Activated CD4-positive, alpha-beta T cell treated with anti-CD3 and anti-CD28 coated beads for 36 hours (primary cell): ENCODE measurements at regions of chr17 and their contacts with region 1.

Region 1: DNA sequence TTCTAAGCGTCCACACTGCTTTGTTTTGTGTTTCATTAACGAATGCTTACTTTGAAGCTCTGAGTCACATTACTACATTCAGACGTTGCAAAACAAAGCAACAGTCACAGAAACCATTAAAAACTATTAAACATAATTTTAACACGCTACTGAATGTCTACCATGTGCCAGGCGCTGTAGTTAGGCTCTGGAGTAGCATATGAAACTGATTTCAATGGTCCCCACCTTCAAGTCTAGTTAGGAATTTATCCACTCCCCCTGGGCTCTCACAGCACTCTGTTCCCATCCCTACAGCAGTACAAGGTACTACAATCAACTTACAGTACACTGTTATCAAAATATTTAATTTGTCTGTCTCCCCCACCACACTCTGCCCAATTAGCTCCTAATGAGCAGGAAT is 631 bp downstream of the UTP6 start:
- DNase-seq: no peak
- ATAC-seq: no peak
- H3K4me3 Mint-ChIP-seq: no peak overlapping the region
- H3K27ac Mint-ChIP-seq: no peak overlapping the region
- H3K4me1 Mint-ChIP-seq: peaks cover 17% of the 10 kb centered on the region
- H3K27me3 Mint-ChIP-seq: no peaks in the 10 kb centered on the region

Region 2: DNA sequence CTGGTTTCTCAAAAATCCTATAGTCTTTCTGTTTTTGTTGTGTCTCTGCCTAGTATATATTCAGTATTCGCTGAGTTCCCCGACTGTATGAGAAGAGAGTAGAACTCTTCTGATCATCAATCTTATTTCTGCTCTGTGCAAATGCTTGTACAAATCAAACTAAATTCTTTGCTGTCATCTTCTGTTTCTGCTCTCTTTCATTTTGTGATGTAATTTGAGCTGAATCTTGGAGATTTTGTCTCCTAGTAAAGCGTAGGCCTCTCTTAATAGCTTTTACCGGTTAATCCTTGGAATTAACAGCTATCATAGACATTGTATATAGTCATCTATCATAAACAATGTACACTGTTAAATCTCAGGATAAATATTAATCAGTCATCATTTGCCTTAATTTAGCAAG is 665.8 kb before region 1 on chr17:
- CTCF ChIA-PET with region 1: no interaction called
- POLR2A ChIA-PET with region 1: no interaction called
- intact Hi-C with region 1: no loop called
- DNase-seq: no peak
- ATAC-seq: no peak
- H3K4me3 Mint-ChIP-seq: no peak overlapping the region
- H3K27ac Mint-ChIP-seq: no peak overlapping the region
- H3K4me1 Mint-ChIP-seq: no peaks in the 10 kb centered on the region
- H3K27me3 Mint-ChIP-seq: no peaks in the 10 kb centered on the region

Region 3: GRCh38 chr17:31494259-31495021 is 406.4 kb before region 1 on chr17:
- CTCF ChIA-PET with region 1: interaction called, 3 read pairs
- POLR2A ChIA-PET with region 1: no interaction called
- intact Hi-C with region 1: loop called in 1 of 2 experiments (anchors 2 kb)
- DNase-seq: peak; percentile 82
- ATAC-seq: peak; percentile 86
- H3K4me3 Mint-ChIP-seq: peak overlapping the region; percentile 58
- H3K27ac Mint-ChIP-seq: peak overlapping the region; percentile 97
- H3K4me1 Mint-ChIP-seq: peaks cover 91% of the 10 kb centered on the region
- H3K27me3 Mint-ChIP-seq: no peaks in the 10 kb centered on the region

Region 4: GRCh38 chr17:31858642-31859473 is 42.0 kb before region 1 on chr17 and contains the start of gene COPRS:
- CTCF ChIA-PET with region 1: interaction called, 9 read pairs
- POLR2A ChIA-PET with region 1: no interaction called
- intact Hi-C with region 1: loop called (anchors 1 to 2 kb)
- DNase-seq: peak; percentile 91
- ATAC-seq: peak; percentile 77
- H3K4me3 Mint-ChIP-seq: peak within 1 kb of the TSS; percentile 84
- H3K27ac Mint-ChIP-seq: peak within 1 kb of the TSS; percentile 86
- H3K4me1 Mint-ChIP-seq: peaks cover 19% of the 10 kb centered on the region
- H3K27me3 Mint-ChIP-seq: no peaks in the 10 kb centered on the region
- total RNA-seq, gene COPRS: 35.0 to 41.3 TPM

Region 5: GRCh38 chr17:31919802-31920525 is 19.1 kb after region 1 on chr17:
- CTCF ChIA-PET with region 1: interaction called, 4 read pairs
- POLR2A ChIA-PET with region 1: interaction called, 3 read pairs
- intact Hi-C with region 1: loop called (anchors 1 to 2 kb)
- DNase-seq: peak; percentile 45
- ATAC-seq: peak; percentile 89
- H3K4me3 Mint-ChIP-seq: peak overlapping the region; percentile 43
- H3K27ac Mint-ChIP-seq: peak overlapping the region; percentile 94
- H3K4me1 Mint-ChIP-seq: peaks cover 25% of the 10 kb centered on the region
- H3K27me3 Mint-ChIP-seq: peaks cover 18% of the 10 kb centered on the region

Region 6: DNA sequence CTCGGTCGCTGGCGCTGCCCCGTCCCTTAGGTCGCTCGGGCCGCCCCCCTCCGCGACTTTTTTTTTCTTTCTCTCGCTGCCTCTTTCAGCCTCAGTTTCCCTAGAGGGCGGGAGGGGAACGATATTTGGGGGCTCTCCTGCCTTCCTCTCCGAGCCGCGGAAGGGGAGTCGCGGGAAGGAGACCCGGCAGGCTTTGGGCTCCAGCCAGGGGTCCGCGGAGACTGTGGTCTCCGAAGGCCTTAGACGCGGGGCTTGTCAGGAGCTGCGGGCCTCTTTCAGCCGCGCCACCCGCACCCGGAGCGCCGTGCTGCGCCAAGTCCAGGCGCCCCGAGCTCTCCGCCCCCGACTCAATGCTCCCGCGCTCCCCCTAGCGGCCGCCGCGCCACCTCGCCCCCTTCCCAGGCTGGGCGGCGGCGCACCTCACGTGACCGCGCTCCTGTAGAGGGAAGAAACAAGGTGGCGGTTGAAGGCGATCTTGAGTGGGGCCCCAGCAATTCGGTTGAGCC is 106.1 kb after region 1 on chr17 and contains the start of gene LRRC37B:
- CTCF ChIA-PET with region 1: interaction called, 7 read pairs
- POLR2A ChIA-PET with region 1: no interaction called
- intact Hi-C with region 1: loop called in 1 of 2 experiments (anchors 2 kb)
- DNase-seq: peak; percentile 94
- ATAC-seq: peak; percentile 91
- H3K4me3 Mint-ChIP-seq: peak within 1 kb of the TSS; percentile 86
- H3K27ac Mint-ChIP-seq: peak within 1 kb of the TSS; percentile 90
- H3K4me1 Mint-ChIP-seq: peaks cover 26% of the 10 kb centered on the region
- H3K27me3 Mint-ChIP-seq: no peaks in the 10 kb centered on the region
- total RNA-seq, gene LRRC37B: 14.3 to 16.6 TPM